ENCODE measurements at regions of chr9 and their contacts with region 1.

Region 1: GRCh38 chr9:35489313-35490154 is at the start of gene RUSC2:
- DNase-seq: peak; percentile 93 to 96
- ATAC-seq: peak; percentile 92
- H3K4me3 ChIP-seq: peak within 1 kb of the TSS; percentile 83 to 87
- H3K27ac ChIP-seq: peak within 1 kb of the TSS; percentile 65 to 89
- H3K4me1 ChIP-seq: no peaks in the 10 kb centered on the region
- H3K27me3 ChIP-seq: no peaks in the 10 kb centered on the region
- total RNA-seq, gene RUSC2: 65.8 to 112 TPM

Region 2: DNA sequence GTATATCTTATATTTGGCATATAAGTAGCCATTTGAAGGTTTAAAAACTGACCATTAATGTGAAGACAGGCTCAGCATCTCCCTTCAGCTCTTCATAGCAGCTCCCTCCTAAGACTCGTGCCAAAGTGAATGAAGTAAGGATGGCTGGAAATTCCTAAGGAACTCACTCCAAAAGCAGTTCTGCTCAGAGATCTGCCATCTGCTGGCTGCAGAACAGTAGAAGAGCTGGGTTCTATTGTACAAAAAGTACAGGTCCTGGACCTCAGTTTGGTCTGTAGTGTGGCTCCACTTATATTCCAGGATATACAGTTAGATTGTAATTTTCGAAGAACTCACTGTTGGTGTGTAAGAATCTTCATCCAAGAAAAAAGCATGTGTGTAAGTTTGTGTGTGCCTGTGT is 104.5 kb before region 1 on chr9:
- intact Hi-C with region 1: no loop called
- DNase-seq: no peak
- ATAC-seq: peak; percentile 73
- H3K4me3 ChIP-seq: no peak overlapping the region
- H3K27ac ChIP-seq: no peak overlapping the region
- H3K4me1 ChIP-seq: no peaks in the 10 kb centered on the region
- H3K27me3 ChIP-seq: no peaks in the 10 kb centered on the region

Region 3: DNA sequence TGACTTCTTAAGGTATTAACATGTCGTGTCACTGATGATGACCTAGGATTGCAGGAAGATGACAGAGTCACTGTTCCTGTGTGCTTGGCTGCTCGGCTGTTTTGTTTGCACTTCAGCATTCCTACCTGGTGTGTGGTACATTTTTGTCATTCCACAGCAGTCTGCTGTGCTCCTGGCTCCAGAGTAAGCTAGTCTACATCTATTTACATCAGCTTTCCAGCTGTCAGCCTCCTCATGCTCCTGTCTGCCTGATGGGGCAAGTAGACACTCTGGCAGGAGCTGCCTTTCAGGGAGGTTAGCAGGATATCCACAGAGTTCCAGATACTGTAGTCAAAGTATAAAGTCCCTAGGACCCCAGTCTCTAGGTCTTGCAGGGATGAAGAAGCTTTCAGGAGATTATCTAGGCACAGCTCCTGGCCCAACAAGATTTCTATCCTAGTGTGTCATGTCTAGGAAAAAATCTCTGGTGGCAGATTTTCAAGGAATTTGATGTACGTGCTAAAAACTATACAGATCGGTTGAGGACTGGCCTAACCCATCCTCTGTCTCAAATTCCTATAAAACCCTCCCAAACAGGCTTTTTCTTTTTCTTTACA is 28.8 kb after region 1 on chr9:
- intact Hi-C with region 1: loop called in 1 of 2 experiments (anchors 2 kb)
- DNase-seq: no peak
- ATAC-seq: no peak
- H3K4me3 ChIP-seq: no peak overlapping the region
- H3K27ac ChIP-seq: peak overlapping the region; percentile 93 to 96
- H3K4me1 ChIP-seq: peaks cover 21 to 49% of the 10 kb centered on the region in 2 donors
- H3K27me3 ChIP-seq: no peaks in the 10 kb centered on the region

Region 4: DNA sequence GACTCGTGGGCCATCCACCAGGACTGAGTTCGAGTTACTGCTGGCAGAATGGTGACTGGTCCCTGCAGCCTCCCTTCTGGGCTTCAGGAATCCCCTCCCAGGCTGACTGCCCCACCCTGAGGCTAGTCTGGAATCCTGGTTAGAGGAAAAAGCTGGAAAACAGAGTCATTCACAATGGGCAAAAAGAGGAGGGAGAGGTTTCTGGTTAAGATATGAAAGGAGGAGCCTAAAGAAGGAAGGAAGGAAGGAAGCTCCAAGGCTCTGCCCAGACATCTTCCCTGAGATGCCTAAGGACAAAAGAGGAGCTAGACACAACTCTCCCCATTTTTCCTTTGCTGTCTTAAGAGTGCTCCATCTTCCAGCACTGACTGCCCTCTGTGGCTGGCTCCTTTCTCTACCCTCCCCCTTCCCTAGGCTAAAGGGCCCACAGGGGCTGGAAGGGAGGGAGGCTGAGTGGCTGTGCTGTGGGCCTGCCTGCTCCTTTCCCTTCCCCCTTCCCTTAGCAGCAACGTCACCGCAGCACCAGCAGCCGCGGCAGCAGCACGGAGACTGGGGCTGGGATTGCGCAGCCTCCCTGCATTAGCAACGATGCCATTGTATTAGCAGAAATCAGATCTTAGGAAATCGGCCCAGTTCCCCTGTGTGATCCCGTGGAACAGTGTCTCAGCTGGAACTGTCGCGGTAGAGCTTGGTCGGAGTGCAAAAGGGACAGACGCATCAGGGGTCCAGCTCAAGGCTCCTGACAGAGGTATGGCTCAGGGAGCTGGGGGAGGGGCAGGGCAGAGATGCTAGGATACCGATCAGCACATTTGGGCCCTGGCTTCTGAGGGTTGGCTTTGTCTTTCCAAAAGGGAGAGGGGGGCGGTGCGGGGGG is 49.1 kb after region 1 on chr9:
- intact Hi-C with region 1: loop called in 1 of 2 experiments (anchors 5 kb)
- DNase-seq: peak; percentile 87 to 91
- ATAC-seq: peak; percentile 92
- H3K4me3 ChIP-seq: peak overlapping the region in 1 of 2 donors; percentile 22
- H3K27ac ChIP-seq: peak overlapping the region; percentile 62 to 64
- H3K4me1 ChIP-seq: peaks cover 0 to 16% of the 10 kb centered on the region in 2 donors
- H3K27me3 ChIP-seq: no peaks in the 10 kb centered on the region

Region 5: GRCh38 chr9:35553670-35554543 is 64.4 kb after region 1 on chr9:
- intact Hi-C with region 1: loop called (anchors 2 kb)
- DNase-seq: peak in 1 of 2 donors; percentile 81
- ATAC-seq: peak; percentile 90
- H3K4me3 ChIP-seq: no peak overlapping the region
- H3K27ac ChIP-seq: peak overlapping the region in 1 of 2 donors; percentile 26
- H3K4me1 ChIP-seq: peaks cover 3 to 4% of the 10 kb centered on the region in 2 donors
- H3K27me3 ChIP-seq: no peaks in the 10 kb centered on the region

Measured in aorta (tissue), 5 donors.